Left cardiac atrium (tissue), 4 donors: ENCODE measurements at regions of chr9 and their contacts with region 1.

Region 1: GRCh38 chr9:116860509-116861120 is 173.5 kb downstream of the TRIM32 start:
- DNase-seq: peak; percentile 73
- ATAC-seq: peak; percentile 59 to 87

Region 2: GRCh38 chr9:116737152-116737546 is 123.5 kb before region 1 on chr9:
- intact Hi-C with region 1: loop called (anchors 1 to 5 kb)
- DNase-seq: peak; percentile 83
- ATAC-seq: peak; percentile 87 to 89